Heart right ventricle (tissue), 16 donors: ENCODE measurements at regions of chr3 and their contacts with region 1.

Region 1: GRCh38 chr3:194691481-194692283 is 6.0 kb downstream of the FAM43A start:
- DNase-seq: no peak
- ATAC-seq: no peak
- H3K4me3 ChIP-seq: no peak overlapping the region
- H3K27ac ChIP-seq: peak overlapping the region in 6 of 10 donors; percentile 2 to 96 (median 28)
- H3K4me1 ChIP-seq: peaks cover 12 to 64% (median 42%) of the 10 kb centered on the region in 9 donors
- H3K27me3 ChIP-seq: no peaks in the 10 kb centered on the region
- CTCF ChIP-seq: no peak

Region 2: DNA sequence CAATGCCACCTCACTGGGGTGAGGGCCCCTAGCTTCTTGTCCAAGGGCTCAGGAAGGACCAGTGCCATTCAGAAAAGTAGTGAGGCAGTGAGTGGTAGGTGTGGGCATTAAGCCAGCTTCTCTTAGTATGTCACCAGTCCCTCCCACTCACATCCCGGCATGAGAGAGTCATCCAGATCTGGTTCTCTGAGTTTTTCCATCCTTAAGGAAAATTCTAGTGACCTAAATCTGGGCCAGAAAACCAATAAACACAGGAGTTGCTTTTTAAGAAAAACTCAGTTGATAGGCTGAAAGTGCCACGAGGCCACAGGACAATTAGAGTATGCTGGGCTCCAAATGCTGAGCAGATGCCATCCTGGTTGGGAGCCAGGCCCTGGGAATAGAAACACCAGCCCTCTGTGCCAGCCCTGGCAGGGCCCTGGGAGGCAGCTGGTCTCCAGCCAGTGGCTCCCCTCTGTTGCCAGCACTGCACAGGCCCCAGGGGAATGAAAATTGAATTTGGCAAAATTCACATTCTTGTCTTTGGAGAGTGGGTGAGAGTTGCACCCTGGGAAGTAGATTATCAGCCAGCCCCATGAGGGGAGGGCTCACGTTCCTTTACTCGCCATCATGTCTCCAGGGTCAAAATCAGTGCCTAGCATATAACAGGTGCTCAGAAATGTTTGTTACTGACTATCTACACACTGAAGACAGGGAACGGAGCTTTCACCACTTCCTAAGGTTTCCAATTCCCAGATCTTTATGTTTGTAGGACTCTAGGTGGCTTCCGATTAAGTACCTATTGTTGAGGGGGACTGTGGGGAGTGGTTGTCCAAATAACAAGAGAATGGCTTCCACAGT is 46.8 kb after region 1 on chr3:
- intact Hi-C with region 1: loop called in 4 of 10 experiments (anchors 5 kb)
- DNase-seq: peak; percentile 75 to 79
- ATAC-seq: peak; percentile 89 to 98 (median 96)
- H3K4me3 ChIP-seq: no peak overlapping the region
- H3K27ac ChIP-seq: peak overlapping the region in 6 of 10 donors; percentile 17 to 59 (median 42)
- H3K4me1 ChIP-seq: peaks cover 5 to 46% (median 28%) of the 10 kb centered on the region in 9 donors
- H3K27me3 ChIP-seq: no peaks in the 10 kb centered on the region
- CTCF ChIP-seq: no peak

Region 3: DNA sequence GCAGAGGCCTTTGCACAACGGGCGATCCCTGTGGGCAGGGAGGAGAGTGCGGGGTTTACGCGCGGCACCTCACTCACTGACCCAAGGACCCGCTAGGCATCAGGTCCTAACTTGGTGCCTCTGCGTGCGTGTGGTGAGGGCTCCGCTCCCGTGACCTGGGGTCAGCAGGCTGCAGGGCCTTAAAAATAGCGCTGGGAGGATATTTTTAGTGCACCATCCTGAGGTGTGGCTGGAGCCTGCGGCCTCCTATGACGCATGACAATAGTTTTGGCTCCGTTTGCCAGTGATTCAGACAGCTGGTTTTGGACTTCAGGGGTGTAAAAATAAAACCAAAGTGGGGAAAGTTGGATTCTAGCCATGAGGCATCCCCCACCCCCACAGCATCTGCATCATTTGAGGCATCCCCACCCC is 133.0 kb after region 1 on chr3:
- intact Hi-C with region 1: no loop called
- DNase-seq: peak; percentile 73 to 87
- ATAC-seq: peak; percentile 92 to 99 (median 98)
- H3K4me3 ChIP-seq: peak overlapping the region in 3 of 10 donors; percentile 12 to 23 (median 12)
- H3K27ac ChIP-seq: peak overlapping the region in 9 of 10 donors; percentile 47 to 94 (median 82)
- H3K4me1 ChIP-seq: peaks cover 4 to 30% (median 23%) of the 10 kb centered on the region in 9 donors
- H3K27me3 ChIP-seq: no peaks in the 10 kb centered on the region
- CTCF ChIP-seq: no peak

Region 4: DNA sequence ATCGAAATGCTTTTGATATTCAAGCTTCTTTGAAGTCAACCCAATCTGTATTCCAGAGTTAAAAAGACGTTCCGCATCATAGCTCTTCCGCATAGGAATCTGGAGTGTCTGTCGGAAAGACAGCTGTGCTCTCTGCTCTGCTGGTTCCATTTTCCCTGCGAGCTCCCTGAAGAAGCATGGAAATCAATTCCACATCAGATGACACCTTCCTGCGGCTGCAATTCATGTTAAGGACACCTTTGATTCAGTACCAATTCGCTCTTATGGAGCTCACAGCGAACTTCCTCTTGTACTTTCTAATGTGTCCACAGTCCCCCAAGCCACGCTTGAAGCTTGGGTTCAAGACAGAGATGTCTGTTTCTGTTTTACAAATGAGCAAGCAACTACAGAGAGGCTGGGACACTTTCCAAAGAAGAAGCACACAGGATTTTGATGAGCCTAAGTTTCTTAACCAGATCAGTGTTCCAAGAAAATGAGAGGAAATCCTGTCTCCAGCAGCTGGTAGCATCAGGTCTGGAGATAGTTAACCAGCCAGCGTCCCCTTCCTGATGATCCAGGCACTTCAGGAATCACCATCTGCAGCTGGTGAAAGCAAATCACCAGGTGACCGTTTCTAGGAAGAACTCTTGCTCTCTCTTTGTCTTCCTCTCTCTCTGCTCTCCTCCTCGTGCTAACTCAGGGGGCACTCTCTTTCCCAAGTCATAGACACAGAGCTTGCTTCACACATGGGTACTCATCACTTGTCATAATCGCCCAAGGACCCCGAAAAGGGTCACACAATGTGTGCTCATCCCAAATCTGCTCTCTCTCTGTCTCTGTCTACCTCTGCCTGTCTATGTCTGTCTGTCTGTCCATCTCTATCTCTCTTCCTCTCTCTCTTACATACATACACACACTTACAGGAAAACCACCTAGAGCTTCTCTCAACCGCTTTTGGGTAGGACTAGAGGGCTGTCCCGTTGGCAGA is 275.8 kb after region 1 on chr3:
- intact Hi-C with region 1: loop called in 1 of 10 experiments (anchors 10 kb)
- DNase-seq: no peak
- ATAC-seq: no peak
- H3K4me3 ChIP-seq: no peak overlapping the region
- H3K27ac ChIP-seq: no peak overlapping the region
- H3K4me1 ChIP-seq: peaks cover 0 to 8% (median 0%) of the 10 kb centered on the region in 9 donors
- H3K27me3 ChIP-seq: no peaks in the 10 kb centered on the region
- CTCF ChIP-seq: no peak